ENCODE measurements at regions of chr10 and their contacts with region 1.

Region 1: GRCh38 chr10:72364239-72364777 is 9.6 kb upstream of the DNAJB12 start:
- DNase-seq: peak; percentile 72 to 88
- ATAC-seq: peak; percentile 93

Region 2: DNA sequence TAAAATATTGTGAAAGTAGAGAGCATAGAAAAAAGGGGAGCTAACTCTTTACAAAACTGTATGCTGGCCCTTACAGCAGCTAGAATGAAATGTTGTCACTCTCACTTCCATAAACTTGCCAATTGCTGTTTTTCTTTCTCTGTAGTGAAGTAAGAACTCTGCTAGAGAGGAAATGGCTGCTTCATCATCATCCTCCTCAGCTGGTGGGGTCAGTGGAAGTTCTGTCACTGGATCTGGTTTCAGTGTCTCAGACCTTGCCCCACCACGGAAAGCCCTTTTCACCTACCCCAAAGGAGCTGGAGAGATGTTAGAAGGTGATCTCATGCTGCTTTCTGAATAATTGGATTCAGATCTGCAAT is 140.6 kb before region 1 on chr10:
- intact Hi-C with region 1: no loop called
- DNase-seq: no peak
- ATAC-seq: no peak

Region 3: GRCh38 chr10:72445851-72446250 is 81.5 kb after region 1 on chr10:
- intact Hi-C with region 1: no loop called
- DNase-seq: no peak
- ATAC-seq: no peak

Region 4: DNA sequence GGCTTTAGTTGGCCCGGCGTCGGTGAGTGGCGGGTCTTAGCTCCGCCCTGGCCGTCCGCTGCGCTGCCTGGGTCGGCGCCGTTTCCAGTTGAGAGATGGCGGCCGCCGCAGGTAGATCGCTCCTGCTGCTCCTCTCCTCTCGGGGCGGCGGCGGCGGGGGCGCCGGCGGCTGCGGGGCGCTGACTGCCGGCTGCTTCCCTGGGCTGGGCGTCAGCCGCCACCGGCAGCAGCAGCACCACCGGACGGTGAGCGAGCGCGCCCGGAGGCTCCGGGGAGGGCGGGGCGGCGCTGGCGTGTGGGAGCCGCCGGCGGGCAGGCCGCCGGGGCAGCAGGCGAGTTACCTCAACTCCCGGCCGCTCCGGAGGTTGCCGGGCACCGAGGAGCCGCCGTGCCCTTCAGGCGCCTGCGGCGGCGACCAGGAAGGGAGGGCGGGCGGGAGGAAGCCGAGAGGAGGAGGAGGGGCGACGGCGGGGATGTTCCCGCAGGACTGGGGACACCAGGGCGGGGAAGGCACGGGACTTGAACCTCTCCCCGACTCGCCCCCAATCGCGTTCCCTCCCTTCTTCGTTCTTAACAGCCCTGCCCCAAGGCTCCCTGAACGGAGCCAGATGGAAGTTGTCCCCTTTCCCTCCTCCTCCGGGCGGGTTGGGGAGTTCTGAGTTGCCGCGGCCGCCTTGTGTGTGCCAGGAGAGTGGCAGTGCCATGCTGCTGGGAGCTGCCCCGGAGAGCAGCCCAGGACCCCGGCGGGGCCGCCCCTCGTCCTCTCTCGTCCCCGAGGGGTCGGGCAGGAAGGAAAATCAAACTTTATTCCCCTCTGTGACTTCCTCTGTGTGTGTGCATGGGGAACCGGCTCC is 328.0 kb after region 1 on chr10 and contains the start of gene MCU:
- intact Hi-C with region 1: loop called in 1 of 2 experiments (anchors 10 kb)
- DNase-seq: peak; percentile 78 to 96
- ATAC-seq: peak; percentile 84
- total RNA-seq, gene MCU: 84.6 to 106 TPM

Region 5: GRCh38 chr10:73060738-73061635 is 696.7 kb after region 1 on chr10:
- intact Hi-C with region 1: loop called in 1 of 2 experiments (anchors 10 kb)
- DNase-seq: no peak
- ATAC-seq: peak; percentile 71

Measured in left colon (tissue), 2 donors.